ENCODE measurements at regions of chr10 and their contacts with region 1.

Region 1: DNA sequence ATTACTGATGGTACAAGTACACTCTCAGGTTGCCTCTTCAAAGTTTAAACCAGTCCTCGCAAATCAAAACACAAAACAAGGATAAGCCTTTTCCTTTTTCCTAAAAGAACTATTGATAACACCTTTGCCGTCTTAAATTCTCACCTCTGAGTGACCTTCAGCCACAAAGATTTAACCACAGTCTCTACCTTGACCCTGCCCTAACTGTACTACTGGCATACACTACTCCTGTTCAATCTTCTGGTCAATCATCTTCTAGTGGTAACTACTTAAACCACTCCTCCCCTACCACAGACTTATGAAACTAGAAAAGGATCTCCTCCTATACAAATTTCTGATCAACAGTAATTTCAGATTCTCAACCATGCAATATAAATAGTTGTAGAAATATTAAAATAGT is 15.1 kb downstream of the UPF2 start:
- H3K4me3 Mint-ChIP-seq: no peak overlapping the region
- H3K27ac Mint-ChIP-seq: no peak overlapping the region
- H3K4me1 Mint-ChIP-seq: peaks cover 18% of the 10 kb centered on the region
- H3K27me3 Mint-ChIP-seq: no peaks in the 10 kb centered on the region

Region 2: GRCh38 chr10:12077580-12078180 is 50.1 kb after region 1 on chr10:
- intact Hi-C with region 1: loop called (anchors 10 kb)
- H3K4me3 Mint-ChIP-seq: no peak overlapping the region
- H3K27ac Mint-ChIP-seq: peak overlapping the region; percentile 62
- H3K4me1 Mint-ChIP-seq: peaks cover 26% of the 10 kb centered on the region
- H3K27me3 Mint-ChIP-seq: no peaks in the 10 kb centered on the region